ENCODE measurements at regions of chr3 and their contacts with region 1.

Region 1: GRCh38 chr3:133661454-133662277 is at the start of gene TOPBP1:
- DNase-seq: peak; percentile 91
- H3K4me3 Mint-ChIP-seq: peak within 1 kb of the TSS; percentile 98
- H3K27ac Mint-ChIP-seq: peak within 1 kb of the TSS; percentile 96
- H3K4me1 Mint-ChIP-seq: peaks cover 47% of the 10 kb centered on the region
- H3K27me3 Mint-ChIP-seq: no peaks in the 10 kb centered on the region
- total RNA-seq, gene TOPBP1: 76.9 to 82.4 TPM

Region 2: DNA sequence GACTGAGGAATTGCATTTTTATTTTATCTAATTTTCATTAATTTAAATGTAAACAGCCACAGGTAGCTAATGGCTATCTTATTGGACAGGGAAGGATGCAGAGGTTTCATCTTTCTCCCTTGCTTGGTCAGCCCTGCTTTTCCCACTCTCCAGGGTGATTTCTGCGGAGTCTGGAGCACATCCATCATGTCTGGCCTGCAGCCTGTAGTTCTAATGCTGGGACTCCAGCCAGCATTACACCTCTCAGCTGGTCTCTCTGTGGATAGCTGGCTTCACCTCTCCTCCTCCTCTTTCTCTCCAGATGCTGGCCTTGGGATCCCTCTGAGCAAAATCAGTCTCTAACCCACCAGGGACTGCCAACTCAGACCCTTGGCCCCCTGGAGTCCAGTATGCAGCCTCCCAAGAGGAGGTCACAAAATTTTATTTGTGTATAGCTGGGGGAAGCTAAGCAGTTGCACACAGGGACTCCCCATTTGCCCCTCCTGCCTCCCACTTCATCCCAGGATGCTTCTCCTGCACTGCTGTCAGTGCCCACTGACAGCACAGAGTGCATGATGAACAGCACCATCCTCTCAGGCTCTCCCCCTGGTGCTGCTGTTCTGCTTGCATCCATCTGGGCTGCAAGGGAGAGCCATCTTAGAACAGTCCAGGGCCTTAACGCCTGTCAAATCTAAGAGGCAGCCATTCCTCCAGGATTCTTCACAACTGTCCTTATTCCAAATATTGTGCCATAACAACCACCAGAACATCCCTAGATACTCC is 260.1 kb before region 1 on chr3:
- CTCF ChIA-PET with region 1: no interaction called
- POLR2A ChIA-PET with region 1: no interaction called
- DNase-seq: no peak
- H3K4me3 Mint-ChIP-seq: no peak overlapping the region
- H3K27ac Mint-ChIP-seq: no peak overlapping the region
- H3K4me1 Mint-ChIP-seq: no peaks in the 10 kb centered on the region
- H3K27me3 Mint-ChIP-seq: no peaks in the 10 kb centered on the region

Region 3: DNA sequence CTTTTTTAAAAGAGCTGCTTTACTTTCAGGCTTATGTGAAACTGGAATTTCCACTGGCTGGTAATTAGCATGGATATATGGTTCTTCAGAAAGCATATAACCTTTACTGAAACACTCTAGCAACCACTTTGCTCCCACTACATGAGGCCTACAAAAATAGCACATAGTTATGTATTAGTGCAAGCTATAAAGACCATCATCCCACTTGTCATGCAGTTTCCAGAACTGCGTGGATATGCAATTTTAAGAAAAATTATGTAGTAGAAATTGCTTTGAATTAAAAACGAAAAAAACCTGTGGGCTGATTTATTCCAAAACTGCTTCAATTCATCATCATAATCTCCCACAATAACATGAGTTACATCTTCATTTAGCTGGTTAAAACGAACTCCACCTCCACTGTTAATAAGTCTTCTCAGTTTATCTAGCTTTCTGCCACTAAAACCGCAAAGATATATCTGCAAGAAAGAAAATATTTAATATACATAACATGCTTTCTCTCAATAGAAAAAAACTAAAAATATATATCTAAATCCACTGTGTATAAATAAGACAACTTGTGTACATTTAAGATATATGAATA is 12.1 kb before region 1 on chr3:
- CTCF ChIA-PET with region 1: interaction called, 3 read pairs
- POLR2A ChIA-PET with region 1: interaction called, 19 read pairs
- DNase-seq: no peak
- H3K4me3 Mint-ChIP-seq: no peak overlapping the region
- H3K27ac Mint-ChIP-seq: no peak overlapping the region
- H3K4me1 Mint-ChIP-seq: peaks cover 16% of the 10 kb centered on the region
- H3K27me3 Mint-ChIP-seq: no peaks in the 10 kb centered on the region

Region 4: DNA sequence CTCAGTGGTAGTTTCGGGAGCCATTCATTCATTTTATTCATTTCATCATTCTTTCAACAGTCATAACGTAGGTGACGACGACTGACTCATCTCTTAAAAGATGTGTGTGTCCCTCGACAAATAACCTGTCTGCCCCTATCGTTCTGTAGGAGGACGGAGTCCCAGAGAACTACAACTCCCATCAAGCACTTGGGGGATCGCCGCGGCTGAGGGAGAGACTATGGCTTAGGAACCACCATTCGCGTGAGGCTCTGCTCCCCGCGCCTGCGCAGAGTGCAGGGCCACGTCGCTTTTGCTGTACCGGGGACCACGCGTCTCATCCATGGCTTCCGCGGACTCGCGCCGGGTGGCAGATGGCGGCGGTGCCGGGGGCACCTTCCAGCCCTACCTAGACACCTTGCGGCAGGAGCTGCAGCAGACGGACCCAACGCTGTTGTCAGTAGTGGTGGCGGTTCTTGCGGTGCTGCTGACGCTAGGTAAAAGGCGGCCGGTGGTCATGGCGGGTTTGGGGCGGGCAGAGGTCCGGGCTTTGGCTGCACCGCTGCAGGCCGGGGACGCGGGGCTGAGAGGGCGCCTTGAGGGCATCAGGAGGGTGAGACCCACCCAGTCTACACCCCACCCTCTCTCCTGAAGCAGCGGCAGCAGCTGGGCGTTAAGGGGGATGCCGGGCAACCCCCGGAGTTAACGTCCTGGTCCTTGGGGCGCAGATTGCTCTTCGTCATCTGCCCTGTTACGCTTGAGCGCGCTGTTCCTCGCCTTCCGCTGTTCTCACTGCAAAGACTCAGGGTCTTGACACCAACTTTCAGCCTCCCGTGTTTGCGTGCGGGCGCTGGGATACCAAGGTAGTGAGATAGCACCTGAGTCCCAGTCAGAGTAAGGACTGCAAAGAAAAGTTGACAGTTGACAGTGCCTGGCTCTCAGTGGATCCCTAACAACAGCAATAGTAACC is 144.1 kb after region 1 on chr3 and contains the start of gene SRPRB:
- CTCF ChIA-PET with region 1: no interaction called
- POLR2A ChIA-PET with region 1: interaction called, 14 read pairs
- DNase-seq: peak; percentile 96
- H3K4me3 Mint-ChIP-seq: peak within 1 kb of the TSS; percentile 98
- H3K27ac Mint-ChIP-seq: peak within 1 kb of the TSS; percentile 89
- H3K4me1 Mint-ChIP-seq: peaks cover 34% of the 10 kb centered on the region
- H3K27me3 Mint-ChIP-seq: peaks cover 3% of the 10 kb centered on the region
- total RNA-seq, gene SRPRB: 44.5 to 46.8 TPM